ENCODE measurements at regions of chr9 and their contacts with region 1.

Region 1: DNA sequence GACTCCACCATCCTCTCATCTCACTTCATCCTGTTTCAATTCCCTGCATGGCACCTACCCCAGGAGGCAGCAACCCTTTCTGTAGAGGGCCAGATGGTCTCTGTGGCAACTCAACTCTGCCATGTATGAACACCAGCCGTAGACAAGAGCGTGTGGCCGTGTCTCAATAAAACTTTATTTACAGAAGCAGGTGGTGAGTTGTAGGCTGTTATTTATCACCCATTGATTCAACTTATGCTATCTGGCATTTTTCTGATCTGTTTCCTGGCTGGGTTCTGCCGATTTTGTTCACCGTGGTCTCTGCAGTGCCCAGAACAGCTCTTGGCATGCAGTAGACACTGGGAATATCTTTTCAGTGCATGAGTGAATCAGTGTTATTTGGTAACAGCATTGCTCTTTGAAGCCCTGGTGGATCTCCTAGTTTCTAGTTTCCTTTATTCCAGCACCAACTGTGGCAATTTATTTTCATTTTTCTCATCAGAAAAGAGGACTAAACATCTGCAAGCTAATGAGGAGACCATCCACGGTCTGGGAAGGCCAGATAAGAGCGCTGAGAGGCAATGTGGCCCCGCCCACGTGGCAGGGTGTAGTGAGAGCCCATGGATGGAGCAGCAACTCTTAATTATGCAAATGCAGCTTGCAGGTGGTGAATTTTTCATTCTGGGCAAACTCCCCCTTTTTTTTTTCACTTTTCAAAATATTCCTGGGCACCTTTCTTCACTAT is 77.9 kb downstream of the CTSL start:
- DNase-seq: no peak
- ATAC-seq: no peak
- H3K4me3 ChIP-seq: no peak overlapping the region
- H3K27ac ChIP-seq: no peak overlapping the region
- H3K4me1 ChIP-seq: no peaks in the 10 kb centered on the region
- H3K27me3 ChIP-seq: peaks cover 0 to 29% (median 2%) of the 10 kb centered on the region in 9 donors
- CTCF ChIP-seq: no peak
- POLR2A ChIP-seq: no peak

Region 2: GRCh38 chr9:87650611-87651295 is 153.0 kb before region 1 on chr9:
- intact Hi-C with region 1: no loop called
- DNase-seq: no peak
- ATAC-seq: no peak
- H3K4me3 ChIP-seq: no peak overlapping the region
- H3K27ac ChIP-seq: no peak overlapping the region
- H3K4me1 ChIP-seq: peaks cover 0 to 7% (median 0%) of the 10 kb centered on the region in 12 donors
- H3K27me3 ChIP-seq: no peaks in the 10 kb centered on the region
- CTCF ChIP-seq: no peak
- POLR2A ChIP-seq: no peak

Region 3: DNA sequence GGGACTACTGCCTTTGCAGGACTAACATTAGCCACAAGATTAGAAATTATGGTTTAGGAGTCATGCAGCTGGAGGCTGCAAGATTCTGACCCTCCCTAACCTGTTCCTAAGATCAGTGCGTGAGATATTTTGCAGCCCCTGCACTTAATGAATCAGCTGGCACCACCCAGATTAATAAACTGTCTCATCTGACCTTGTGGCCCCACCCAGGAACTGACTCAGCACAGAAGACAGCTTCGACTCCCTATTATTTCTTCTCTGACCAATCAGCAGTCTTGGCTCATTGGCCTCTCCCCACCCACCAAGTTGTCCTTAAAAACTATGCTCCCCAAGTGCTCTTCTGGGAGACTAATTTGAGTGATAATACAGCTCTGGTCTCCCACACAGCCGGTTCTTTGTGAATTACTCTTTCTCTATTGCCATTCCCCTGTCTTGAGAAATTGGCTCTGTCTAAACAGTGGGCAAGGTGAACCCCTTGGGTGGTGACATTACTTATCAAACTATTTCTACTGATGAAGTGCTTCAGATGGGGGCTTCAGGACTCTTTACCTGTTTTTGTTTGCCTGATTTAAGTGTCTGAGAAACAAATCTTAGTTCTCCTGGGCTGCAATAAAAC is 60.9 kb before region 1 on chr9:
- intact Hi-C with region 1: loop called in 1 of 10 experiments (anchors 10 kb)
- DNase-seq: no peak
- ATAC-seq: no peak
- H3K4me3 ChIP-seq: no peak overlapping the region
- H3K27ac ChIP-seq: no peak overlapping the region
- H3K4me1 ChIP-seq: no peaks in the 10 kb centered on the region
- H3K27me3 ChIP-seq: peaks cover 0 to 9% (median 0%) of the 10 kb centered on the region in 9 donors
- CTCF ChIP-seq: no peak
- POLR2A ChIP-seq: no peak

Measured in heart left ventricle (tissue), 16 donors.